ENCODE measurements at regions of chr15 and their contacts with region 1.

Region 1: DNA sequence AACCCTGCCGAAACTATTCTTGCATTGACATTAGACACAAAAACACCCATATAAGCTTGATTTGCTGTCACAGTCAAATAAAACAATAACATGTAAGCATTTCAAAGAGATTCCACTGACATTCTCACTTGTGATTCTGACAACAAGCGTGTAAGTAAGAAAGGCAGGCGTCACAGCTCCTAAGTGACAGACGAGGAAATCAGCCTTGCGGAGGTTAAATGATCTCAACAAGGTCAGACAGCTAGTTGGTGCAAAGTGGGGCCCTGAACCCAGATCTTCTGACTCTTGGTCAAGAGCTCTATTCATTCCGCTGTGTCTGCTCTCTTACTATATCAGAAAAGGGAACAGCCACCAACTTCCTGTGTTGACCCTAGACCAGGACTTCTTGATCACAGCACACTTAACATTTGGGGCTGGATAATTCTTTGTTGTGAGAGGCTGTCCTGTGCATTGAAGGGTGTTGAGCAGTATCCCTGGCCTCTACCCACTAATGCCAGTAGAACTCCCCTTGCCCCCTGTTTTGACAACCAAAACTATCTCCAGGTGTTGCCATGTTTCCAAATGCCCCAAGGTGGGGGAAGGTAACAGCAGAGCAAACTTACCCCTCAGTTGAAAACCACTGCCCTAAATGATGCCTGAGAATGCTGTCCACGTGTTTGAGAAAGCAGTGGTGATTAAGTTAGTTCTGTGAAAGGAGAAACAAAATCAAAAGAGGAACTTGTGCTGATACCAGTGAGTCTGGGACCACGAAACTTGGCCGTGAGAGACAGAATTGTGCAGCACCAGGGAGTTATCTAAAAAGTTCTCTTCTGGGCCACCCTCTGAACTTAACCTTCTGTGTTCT is 86.1 kb downstream of the LIPC start:
- DNase-seq: no peak
- H3K4me3 Mint-ChIP-seq: peak overlapping the region; percentile 28
- H3K27ac Mint-ChIP-seq: peak overlapping the region; percentile 86
- H3K4me1 Mint-ChIP-seq: peaks cover 85% of the 10 kb centered on the region
- H3K27me3 Mint-ChIP-seq: no peaks in the 10 kb centered on the region

Region 2: DNA sequence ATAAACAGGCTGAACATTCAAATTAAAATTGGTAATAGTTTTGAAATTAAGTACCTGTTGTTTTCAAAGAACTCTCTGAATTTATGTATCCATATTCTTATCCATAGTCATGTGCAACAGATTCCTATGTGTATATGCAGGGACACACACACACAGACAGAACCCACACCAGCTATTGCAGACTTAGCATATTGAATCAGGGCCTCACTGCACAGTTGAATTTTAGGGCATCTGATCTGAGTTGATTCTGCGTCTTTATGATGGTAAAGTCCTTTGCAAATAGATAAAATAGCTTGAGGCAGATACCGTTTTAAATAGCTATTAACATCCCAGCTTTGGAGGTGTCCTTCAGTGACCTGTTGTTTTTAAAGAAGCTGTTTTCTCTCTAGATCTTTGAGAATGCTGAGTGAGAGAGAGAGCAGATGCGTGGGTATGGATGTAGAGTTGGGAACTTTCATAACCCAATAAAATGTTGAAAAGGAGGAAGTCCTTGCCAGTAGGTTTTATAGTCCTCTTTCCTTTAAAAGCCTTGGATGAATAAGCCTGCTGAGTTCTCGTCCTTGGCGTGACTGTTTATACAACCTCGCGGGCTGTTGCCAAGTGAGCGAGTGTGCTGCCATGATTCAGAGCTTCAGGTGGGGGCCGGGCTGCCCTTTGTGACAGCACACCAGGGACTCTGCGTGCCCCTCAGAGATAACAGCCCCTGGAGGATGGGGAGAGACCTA is 907.9 kb before region 1 on chr15:
- intact Hi-C with region 1: no loop called
- DNase-seq: no peak
- H3K4me3 Mint-ChIP-seq: no peak overlapping the region
- H3K27ac Mint-ChIP-seq: no peak overlapping the region
- H3K4me1 Mint-ChIP-seq: no peaks in the 10 kb centered on the region
- H3K27me3 Mint-ChIP-seq: no peaks in the 10 kb centered on the region

Region 3: DNA sequence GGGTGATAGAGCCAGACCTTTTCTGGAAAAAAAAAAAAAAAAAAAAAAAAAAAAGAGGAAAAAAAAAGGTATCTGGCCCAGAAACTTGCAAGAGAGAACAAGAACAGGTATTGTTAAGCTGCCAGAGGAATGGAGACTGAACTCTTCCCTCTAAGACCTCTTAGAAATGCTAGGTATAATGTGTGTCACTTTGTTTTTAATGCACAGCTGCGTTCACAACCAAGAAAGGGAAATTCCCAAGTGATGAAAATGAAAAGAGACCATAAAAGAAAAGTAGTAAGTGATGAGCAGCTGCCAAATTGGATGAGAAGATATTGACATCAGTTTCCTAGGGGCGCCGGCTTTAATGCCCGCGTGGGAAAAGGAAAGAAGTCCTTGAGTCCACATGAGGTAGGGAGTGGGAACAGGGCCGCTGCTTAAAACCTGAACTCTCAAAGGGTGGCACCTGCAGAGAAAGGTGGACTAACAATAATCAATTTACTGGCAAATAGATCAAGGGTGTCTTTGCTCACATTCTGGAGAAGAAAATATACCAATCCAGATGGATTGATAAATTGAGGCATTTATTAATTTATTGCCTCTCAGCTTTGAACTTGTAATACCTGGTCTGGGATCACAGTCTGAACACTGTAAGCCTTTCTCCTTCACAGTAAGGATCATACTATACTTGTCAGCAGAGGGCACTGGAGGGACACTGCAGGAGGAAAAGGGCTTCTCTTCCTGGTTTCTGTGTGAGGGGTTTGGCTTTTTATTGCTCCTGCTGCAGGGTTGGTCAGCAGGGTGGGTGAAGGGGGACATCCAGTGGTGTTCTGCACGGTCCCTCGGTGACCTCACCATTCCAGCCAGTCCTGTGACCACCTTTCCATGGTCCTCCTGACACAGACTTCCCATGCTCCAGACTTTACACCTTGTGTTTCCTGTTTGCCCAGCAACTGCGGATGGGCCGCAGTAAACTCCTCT is 248.2 kb before region 1 on chr15:
- intact Hi-C with region 1: loop called (anchors 2 kb)
- DNase-seq: peak; percentile 28
- H3K4me3 Mint-ChIP-seq: peak overlapping the region; percentile 6
- H3K27ac Mint-ChIP-seq: peak overlapping the region; percentile 6
- H3K4me1 Mint-ChIP-seq: peaks cover 16% of the 10 kb centered on the region
- H3K27me3 Mint-ChIP-seq: peaks cover 5% of the 10 kb centered on the region

Region 4: GRCh38 chr15:58307313-58307961 is 210.5 kb before region 1 on chr15:
- intact Hi-C with region 1: no loop called
- DNase-seq: no peak
- H3K4me3 Mint-ChIP-seq: no peak overlapping the region
- H3K27ac Mint-ChIP-seq: no peak overlapping the region
- H3K4me1 Mint-ChIP-seq: peaks cover 27% of the 10 kb centered on the region
- H3K27me3 Mint-ChIP-seq: no peaks in the 10 kb centered on the region

Region 5: DNA sequence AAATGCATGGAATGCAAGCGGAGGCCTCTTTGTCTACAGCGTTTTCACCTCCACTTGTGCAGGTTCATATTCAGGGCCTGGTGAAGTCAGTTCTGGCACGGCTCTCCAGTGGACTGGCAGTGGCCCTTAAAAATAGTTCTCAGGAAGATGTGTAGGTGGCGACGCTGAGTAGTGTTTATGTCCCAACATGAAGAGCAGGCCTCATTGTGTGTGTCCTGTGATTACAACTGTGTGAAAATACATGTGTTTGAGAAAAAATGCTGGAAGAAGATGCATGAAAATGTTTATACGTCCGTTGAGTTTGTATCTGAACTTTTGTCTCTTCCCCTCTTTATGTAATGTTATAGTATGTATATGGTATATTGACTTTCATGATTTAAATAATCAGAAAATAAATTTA is 78.9 kb before region 1 on chr15:
- intact Hi-C with region 1: loop called (anchors 1 kb)
- DNase-seq: peak; percentile 28
- H3K4me3 Mint-ChIP-seq: no peak overlapping the region
- H3K27ac Mint-ChIP-seq: no peak overlapping the region
- H3K4me1 Mint-ChIP-seq: peaks cover 39% of the 10 kb centered on the region
- H3K27me3 Mint-ChIP-seq: no peaks in the 10 kb centered on the region

Region 6: DNA sequence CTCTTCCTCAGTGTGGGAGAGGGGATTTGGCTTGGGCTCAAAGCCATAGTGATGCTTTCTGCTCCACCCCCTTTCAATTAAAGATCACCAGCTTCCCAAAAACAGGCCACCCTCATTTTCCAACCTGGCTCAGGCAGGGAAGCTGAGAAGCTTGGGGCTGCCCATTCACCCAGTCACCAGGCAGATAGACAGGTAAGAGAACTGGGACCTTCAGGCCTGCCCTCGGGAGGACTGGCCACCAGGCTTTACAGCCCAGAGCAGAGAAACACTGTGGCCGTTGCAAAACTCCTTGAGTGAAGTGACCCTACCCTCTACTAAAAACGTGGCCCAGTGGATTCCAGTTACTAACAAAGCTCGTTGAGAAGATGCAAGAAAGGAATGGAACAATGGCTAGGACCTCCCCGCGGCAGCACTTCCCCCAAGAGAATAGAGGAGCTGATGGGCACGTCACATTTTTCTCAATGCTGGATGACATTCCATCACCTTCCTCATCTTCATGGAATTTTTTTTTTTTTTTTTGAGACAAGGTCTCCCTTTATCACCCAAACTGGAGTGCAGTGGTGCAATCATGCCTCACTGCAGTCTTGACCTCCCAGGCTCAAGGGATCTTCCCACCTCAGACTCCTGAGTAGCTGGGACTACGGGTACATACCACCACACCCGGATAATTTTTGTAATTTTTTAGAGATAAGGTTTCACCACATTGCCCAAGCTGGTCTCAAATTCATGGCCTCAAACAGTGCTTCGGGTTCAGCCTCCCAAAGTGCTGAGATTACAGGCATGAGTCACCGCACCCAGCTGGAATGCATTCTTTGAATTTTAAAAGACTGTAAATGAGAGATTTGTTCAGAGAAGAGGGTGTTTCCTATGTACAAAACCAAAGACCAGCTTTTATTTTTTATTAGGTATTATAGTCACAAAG is 48.2 kb before region 1 on chr15:
- intact Hi-C with region 1: loop called (anchors 1 kb)
- DNase-seq: no peak
- H3K4me3 Mint-ChIP-seq: no peak overlapping the region
- H3K27ac Mint-ChIP-seq: no peak overlapping the region
- H3K4me1 Mint-ChIP-seq: peaks cover 59% of the 10 kb centered on the region
- H3K27me3 Mint-ChIP-seq: no peaks in the 10 kb centered on the region

Region 7: GRCh38 chr15:58546635-58547627 is 29.0 kb after region 1 on chr15:
- intact Hi-C with region 1: loop called (anchors 1 kb)
- DNase-seq: no peak
- H3K4me3 Mint-ChIP-seq: no peak overlapping the region
- H3K27ac Mint-ChIP-seq: peak overlapping the region; percentile 97
- H3K4me1 Mint-ChIP-seq: peaks cover 63% of the 10 kb centered on the region
- H3K27me3 Mint-ChIP-seq: no peaks in the 10 kb centered on the region

Region 8: GRCh38 chr15:58704155-58704865 is 186.4 kb after region 1 on chr15:
- intact Hi-C with region 1: loop called (anchors 5 kb)
- DNase-seq: no peak
- H3K4me3 Mint-ChIP-seq: no peak overlapping the region
- H3K27ac Mint-ChIP-seq: no peak overlapping the region
- H3K4me1 Mint-ChIP-seq: peaks cover 49% of the 10 kb centered on the region
- H3K27me3 Mint-ChIP-seq: no peaks in the 10 kb centered on the region

Region 9: DNA sequence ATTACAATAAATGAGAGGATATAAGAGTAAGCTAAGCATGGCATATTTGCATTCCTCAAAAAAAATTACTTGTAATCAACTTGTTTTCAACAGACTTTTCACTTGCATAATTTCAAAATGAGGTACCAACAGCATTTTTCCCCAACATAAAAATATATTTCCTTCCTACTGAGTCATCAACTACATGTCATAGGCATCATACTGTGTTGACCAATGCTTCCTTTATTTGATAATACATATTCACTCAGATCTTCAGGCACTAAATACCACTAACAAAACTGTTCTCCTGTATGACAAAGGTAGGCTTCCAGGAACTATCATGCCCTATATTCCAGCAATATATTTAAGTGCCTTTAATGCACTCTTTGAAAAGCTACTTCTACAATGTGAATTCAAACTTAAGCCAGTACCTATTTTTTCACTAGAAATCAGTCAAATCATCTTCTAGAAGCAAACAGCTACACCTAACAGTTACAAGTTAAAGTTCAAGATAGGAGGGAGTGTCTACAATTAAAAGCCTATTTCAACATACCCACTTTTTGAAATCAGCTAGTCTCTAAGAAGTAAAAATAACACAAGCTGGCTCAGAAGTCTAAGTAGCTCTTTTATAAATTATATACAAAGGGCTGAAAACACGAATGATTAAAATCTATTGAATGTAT is 220.3 kb after region 1 on chr15:
- intact Hi-C with region 1: no loop called
- DNase-seq: no peak
- H3K4me3 Mint-ChIP-seq: no peak overlapping the region
- H3K27ac Mint-ChIP-seq: peak overlapping the region; percentile 21
- H3K4me1 Mint-ChIP-seq: peaks cover 47% of the 10 kb centered on the region
- H3K27me3 Mint-ChIP-seq: no peaks in the 10 kb centered on the region

Region 10: GRCh38 chr15:59138243-59138642 is 620.3 kb after region 1 on chr15:
- intact Hi-C with region 1: no loop called
- DNase-seq: peak; percentile 37
- H3K4me3 Mint-ChIP-seq: no peak overlapping the region
- H3K27ac Mint-ChIP-seq: peak overlapping the region; percentile 88
- H3K4me1 Mint-ChIP-seq: peaks cover 48% of the 10 kb centered on the region
- H3K27me3 Mint-ChIP-seq: no peaks in the 10 kb centered on the region